Aorta (tissue), 5 donors: ENCODE measurements at regions of chr4 and their contacts with region 1.

Region 1: DNA sequence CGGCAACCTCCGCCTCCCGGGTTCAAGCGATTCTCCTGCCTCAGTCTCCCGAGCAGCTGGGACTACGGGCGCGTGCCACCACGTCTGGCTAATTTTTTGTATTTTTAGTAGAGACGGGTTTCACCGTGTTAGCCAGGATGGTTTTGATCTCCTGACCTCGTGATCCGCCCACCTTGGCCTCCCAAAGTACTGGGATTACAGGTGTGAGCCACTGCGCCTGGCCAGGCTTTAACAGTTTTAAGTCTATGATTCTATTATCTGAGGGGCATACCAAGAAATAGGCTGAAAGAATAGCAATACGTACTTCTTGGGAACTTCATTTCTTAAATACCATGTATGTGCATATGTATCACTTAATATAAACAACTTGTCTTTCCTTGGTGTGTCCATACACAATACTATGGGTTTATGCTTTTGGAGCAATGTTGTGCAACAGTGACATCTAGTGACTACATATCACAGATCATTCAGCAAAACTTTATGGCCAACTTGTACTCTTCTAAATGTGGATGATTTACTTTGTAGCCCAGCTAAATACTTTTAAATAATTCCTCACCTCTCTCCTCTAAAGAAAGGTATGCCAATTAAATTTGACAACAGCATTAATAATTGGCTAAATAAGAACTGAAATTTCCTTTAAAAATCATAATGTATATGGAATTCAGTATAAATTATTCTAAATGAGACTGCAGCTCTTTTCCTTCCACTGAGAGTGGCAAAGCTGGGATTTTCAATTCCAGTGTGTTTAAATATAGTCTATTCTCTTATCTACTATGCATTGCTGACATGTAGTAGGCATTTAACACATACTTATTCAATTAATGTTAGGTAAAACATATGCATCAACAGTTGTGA is 10.4 kb downstream of the SLC9B1 start:
- DNase-seq: no peak
- ATAC-seq: peak; percentile 87
- H3K4me3 ChIP-seq: no peak overlapping the region
- H3K27ac ChIP-seq: no peak overlapping the region
- H3K4me1 ChIP-seq: no peaks in the 10 kb centered on the region
- H3K27me3 ChIP-seq: no peaks in the 10 kb centered on the region

Region 2: DNA sequence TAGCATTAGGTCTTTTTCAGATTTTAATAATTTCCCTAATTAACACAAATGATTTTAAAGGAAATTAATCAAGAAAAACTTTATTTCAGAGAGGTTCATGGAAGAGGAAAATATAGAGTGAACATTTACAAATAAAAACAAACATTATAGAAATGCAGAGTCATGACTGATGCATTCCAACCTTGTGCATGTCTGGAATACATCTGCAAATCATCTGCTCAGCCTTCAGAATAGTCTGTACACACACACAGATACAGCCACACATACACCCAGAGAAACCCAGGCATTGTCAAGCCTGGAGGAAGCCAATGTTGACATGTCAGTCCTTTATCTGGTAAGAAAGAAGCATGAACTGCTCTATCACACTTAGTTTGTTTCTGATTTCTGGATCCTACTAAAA is 569.3 kb before region 1 on chr4:
- intact Hi-C with region 1: loop called (anchors 5 kb)
- DNase-seq: no peak
- ATAC-seq: peak; percentile 71
- H3K4me3 ChIP-seq: no peak overlapping the region
- H3K27ac ChIP-seq: no peak overlapping the region
- H3K4me1 ChIP-seq: no peaks in the 10 kb centered on the region
- H3K27me3 ChIP-seq: no peaks in the 10 kb centered on the region

Region 3: GRCh38 chr4:102449751-102450352 is 559.2 kb before region 1 on chr4:
- intact Hi-C with region 1: loop called in 1 of 2 experiments (anchors 5 kb)
- DNase-seq: no peak
- ATAC-seq: peak; percentile 54
- H3K4me3 ChIP-seq: no peak overlapping the region
- H3K27ac ChIP-seq: no peak overlapping the region
- H3K4me1 ChIP-seq: no peaks in the 10 kb centered on the region
- H3K27me3 ChIP-seq: no peaks in the 10 kb centered on the region

Region 4: GRCh38 chr4:102620697-102621497 is 388.2 kb before region 1 on chr4:
- intact Hi-C with region 1: loop called (anchors 2 kb)
- DNase-seq: no peak
- ATAC-seq: peak; percentile 88
- H3K4me3 ChIP-seq: no peak overlapping the region
- H3K27ac ChIP-seq: peak overlapping the region in 1 of 2 donors; percentile 58
- H3K4me1 ChIP-seq: peaks cover 0 to 2% of the 10 kb centered on the region in 2 donors
- H3K27me3 ChIP-seq: no peaks in the 10 kb centered on the region

Region 5: GRCh38 chr4:102674881-102675540 is 334.1 kb before region 1 on chr4:
- intact Hi-C with region 1: no loop called
- DNase-seq: no peak
- ATAC-seq: no peak
- H3K4me3 ChIP-seq: no peak overlapping the region
- H3K27ac ChIP-seq: no peak overlapping the region
- H3K4me1 ChIP-seq: no peaks in the 10 kb centered on the region
- H3K27me3 ChIP-seq: no peaks in the 10 kb centered on the region